H1 (cell line): ENCODE measurements at regions of chr5 and their contacts with region 1.

Region 1: DNA sequence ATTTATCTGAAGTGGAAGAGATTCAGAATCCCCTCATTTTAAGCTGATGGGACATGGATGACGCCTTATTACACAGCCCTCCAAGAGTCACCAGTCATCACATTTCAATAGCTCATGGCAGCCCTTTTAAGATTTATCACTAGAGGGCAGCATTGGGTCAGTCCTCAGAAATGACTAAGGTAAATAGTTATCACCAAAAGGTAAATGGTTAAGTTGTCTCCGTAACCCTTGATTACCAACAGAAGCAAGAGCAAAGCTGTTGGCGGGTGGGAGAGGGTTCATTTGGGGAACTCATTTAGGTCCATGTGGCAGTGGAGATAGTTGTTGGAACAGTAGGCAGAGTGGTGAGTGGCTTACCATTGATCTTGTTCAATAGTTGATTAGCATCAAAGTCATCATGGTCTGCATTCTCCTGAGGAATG is 12.0 kb upstream of the C9 start:
- DNase-seq: peak in 1 of 2 experiments; percentile 58
- H3K4me3 ChIP-seq: no peak overlapping the region
- H3K27ac ChIP-seq: no peak overlapping the region
- H3K4me1 ChIP-seq: peaks cover 0 to 3% (median 1%) of the 10 kb centered on the region in 4 experiments; a peak in 3 of 7 replicates
- H3K27me3 ChIP-seq: no peaks in the 10 kb centered on the region
- CTCF ChIP-seq: peak in 2 of 3 experiments; percentile 79 to 80; a peak in 3 of 4 replicates
- EP300 ChIP-seq: no peak
- POLR2A ChIP-seq: no peak
- RAD21 ChIP-seq: peak; percentile 84 to 90

Region 2: GRCh38 chr5:39360471-39361111 is 15.7 kb before region 1 on chr5:
- CTCF ChIA-PET with region 1: interaction called, 26 read pairs
- POLR2A ChIA-PET with region 1: no interaction called
- DNase-seq: no peak
- H3K4me3 ChIP-seq: no peak overlapping the region
- H3K27ac ChIP-seq: no peak overlapping the region
- H3K4me1 ChIP-seq: peaks cover 0 to 10% (median 2%) of the 10 kb centered on the region in 4 experiments; a peak in 3 of 7 replicates
- H3K27me3 ChIP-seq: no peaks in the 10 kb centered on the region
- CTCF ChIP-seq: no peak
- EP300 ChIP-seq: no peak
- POLR2A ChIP-seq: no peak
- RAD21 ChIP-seq: no peak

Region 3: DNA sequence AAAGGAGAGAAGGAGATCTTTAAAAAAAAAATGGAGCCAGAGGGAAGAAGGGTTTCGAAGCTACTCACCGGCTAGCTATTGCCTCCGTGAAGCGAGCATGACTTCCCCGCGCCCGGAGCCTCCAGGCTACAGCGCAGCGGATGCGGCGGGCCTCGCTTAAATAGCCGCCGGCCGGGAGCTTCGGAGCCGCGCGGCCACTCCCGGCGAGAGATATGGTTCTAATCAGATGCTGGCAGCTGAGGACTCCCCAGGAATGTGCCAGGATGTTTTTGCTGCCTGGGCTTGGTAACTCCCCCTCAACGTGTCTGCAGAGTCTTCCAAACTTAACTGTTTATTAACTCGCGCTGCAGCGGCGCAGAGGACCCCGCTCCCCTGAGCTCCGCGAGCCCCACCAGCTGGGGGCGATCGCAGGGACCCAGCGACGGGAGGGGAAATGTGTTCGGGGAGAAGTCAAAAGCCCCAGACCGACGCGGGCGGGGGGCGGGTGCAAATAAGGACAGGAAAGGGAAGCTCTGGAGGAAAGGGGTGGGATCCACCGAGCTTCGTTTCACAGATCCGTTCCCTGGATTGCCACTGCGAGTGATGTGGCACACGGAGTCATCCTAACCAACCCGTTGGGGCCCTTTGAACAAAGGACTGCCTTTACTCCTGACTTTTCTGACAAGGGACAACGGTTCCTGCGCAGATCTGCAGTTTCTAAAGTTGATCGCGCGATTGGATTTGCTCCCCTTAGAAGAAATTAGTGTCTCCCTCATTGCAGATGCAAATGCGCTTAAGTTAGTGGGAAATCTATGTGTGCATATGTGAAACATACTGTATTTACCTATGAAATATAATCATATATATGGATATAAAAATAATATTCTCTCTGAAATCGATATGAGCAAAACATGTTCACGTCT is 48.7 kb after region 1 on chr5 and contains the start of gene DAB2:
- CTCF ChIA-PET with region 1: interaction called, 13 read pairs
- POLR2A ChIA-PET with region 1: no interaction called
- DNase-seq: peak; percentile 68 to 88
- H3K4me3 ChIP-seq: peak within 1 kb of the TSS; percentile 49 to 66 (median 54)
- H3K27ac ChIP-seq: no peak within 1 kb of the TSS
- H3K4me1 ChIP-seq: peaks cover 2 to 12% (median 9%) of the 10 kb centered on the region in 4 experiments; a peak in 5 of 7 replicates
- H3K27me3 ChIP-seq: peaks cover 0 to 2% (median under 1%) of the 10 kb centered on the region in 4 experiments; a peak in 2 of 7 replicates
- CTCF ChIP-seq: peak; percentile 53 to 66 (median 63)
- EP300 ChIP-seq: no peak
- POLR2A ChIP-seq: 0 out of 3 replicates have a peak, but pooled peaks of 1 of the 2 experiments have one; percentile 20
- RAD21 ChIP-seq: peak; percentile 18 to 51; a peak in 3 of 4 replicates
- total RNA-seq, gene DAB2: 4.9 and 5.0 TPM in 2 replicates

Region 4: DNA sequence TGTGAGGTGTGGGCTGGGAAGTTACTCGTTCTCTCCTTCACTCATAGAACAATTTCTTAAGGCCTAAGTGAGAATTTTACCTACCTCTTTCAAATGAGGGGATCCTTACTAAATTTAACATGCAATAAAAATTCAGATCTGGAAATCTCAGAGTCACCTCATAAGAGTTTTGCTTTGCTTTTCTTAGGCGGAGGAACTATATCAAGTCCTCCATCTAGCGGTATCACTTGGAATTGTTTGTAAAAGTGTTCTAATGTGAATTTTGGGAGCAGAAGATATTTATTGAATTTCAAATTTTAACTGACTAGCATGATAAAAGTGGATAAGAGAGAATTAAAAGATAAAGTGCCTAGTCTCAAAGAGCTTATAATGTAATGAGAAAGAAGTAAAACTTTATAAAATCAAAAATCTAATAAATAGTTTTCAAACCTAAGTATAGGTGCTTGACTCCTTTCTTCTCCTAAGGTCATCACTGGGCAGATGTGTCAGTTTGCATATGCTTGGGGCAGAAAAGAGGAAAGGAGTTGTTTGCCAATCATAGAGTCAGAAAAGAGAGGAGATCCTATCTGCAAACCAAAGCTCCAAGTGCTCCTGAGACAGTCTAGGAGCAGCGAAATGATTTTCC is 194.2 kb after region 1 on chr5:
- CTCF ChIA-PET with region 1: interaction called, 57 read pairs
- POLR2A ChIA-PET with region 1: no interaction called
- DNase-seq: no peak
- H3K4me3 ChIP-seq: no peak overlapping the region
- H3K27ac ChIP-seq: no peak overlapping the region
- H3K4me1 ChIP-seq: no peaks in the 10 kb centered on the region
- H3K27me3 ChIP-seq: no peaks in the 10 kb centered on the region
- CTCF ChIP-seq: peak in 2 of 3 experiments; percentile 41 to 49; a peak in 2 of 4 replicates
- EP300 ChIP-seq: no peak
- POLR2A ChIP-seq: no peak
- RAD21 ChIP-seq: peak; percentile 61 to 73